Right ventricle myocardium inferior (tissue), 1 donor: ENCODE measurements at regions of chr14 and their contacts with region 1.

Region 1: GRCh38 chr14:63641473-63642228 is at the start of gene WDR89:
- DNase-seq: peak; percentile 98
- ATAC-seq: peak; percentile 99
- total RNA-seq, gene WDR89: 6.6 TPM

Region 2: DNA sequence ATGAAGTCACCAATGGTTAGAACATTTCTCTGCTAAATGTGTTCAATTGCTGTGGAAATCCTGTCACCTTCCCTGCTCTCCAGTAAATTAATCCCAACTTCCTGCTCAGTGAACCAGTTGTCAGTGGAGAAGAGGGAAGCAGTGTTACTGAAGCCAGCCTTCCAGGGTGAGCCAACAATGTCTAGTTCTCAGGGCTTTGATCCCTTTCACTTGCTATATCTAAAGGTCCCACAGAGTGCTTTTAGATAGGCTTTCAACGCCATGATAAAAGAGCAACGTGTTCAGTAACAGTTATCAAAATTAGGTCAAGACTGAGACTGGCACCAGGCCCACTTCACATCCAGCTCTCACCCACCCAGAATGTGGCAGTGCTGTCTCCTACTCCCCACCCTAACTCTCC is 736.1 kb before region 1 on chr14:
- intact Hi-C with region 1: no loop called
- DNase-seq: no peak
- ATAC-seq: no peak

Region 3: GRCh38 chr14:63727774-63728728 is 86.4 kb after region 1 on chr14 and contains the start of gene SGPP1:
- intact Hi-C with region 1: loop called (anchors 5 kb)
- DNase-seq: peak; percentile 93
- ATAC-seq: peak; percentile 96
- total RNA-seq, gene SGPP1: 5.4 TPM